Sciatic nerve (tissue), 2 donors: ENCODE measurements at regions of chr12 and their contacts with region 1.

Region 1: GRCh38 chr12:53938326-53939140 is at the start of gene HOXC13:
- DNase-seq: peak; percentile 77
- ATAC-seq: peak; percentile 84
- total RNA-seq, gene HOXC13: 0.22 TPM

Region 2: DNA sequence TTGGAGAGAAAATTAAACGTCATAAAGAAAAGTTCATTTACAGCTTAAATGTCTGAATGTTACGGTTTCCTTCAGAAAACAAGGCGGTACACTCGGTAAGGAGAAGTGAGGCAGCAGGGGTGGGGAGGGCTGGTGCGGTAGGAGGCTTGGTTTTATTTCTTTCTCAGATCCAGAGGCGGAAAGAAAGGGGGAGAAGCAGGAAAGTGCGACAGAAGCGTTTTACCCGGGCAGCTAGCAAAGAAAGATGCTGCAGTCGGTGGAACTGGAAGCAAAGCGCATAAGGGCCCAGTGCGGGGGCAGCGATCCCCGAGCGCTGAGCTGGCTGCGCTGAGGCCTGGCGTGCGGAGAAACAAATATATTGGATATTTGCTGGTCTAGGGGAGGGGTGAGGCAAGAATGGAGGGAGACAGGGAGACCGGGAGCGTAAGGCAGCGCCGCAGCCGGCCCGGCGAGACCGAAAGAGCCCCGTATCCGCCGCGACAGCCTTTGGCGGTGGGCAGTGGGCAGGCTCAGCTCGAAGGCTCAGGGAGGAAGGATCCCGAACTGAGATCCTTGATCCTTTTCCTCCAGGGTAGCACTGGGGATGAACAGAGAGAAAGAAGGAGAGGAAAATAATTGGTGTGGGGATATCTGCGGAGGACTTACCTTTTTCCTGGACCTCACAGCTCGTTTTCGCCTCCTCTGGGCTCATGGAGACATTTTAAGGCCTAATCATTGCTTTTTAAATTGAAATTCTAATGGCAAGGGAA is 28.0 kb after region 1 on chr12:
- intact Hi-C with region 1: loop called (anchors 1 kb)
- DNase-seq: no peak
- ATAC-seq: peak; percentile 66

Region 3: GRCh38 chr12:54053751-54054741 is 115.5 kb after region 1 on chr12 and contains the start of gene HOXC4:
- intact Hi-C with region 1: no loop called
- DNase-seq: no peak
- ATAC-seq: peak; percentile 83
- total RNA-seq, gene HOXC4: 23.6 TPM